ENCODE measurements at regions of chr14 and their contacts with region 1.

Region 1: GRCh38 chr14:62162998-62163589 is 400.9 kb downstream of the SNAPC1 start:
- DNase-seq: peak in 1 of 2 experiments; percentile 48
- H3K4me3 ChIP-seq: no peak overlapping the region
- H3K4me3 Mint-ChIP-seq: no peak overlapping the region
- H3K27ac Mint-ChIP-seq: no peak overlapping the region
- H3K4me1 ChIP-seq: no peaks in the 10 kb centered on the region
- H3K4me1 Mint-ChIP-seq: no peaks in the 10 kb centered on the region
- H3K27me3 ChIP-seq: no peaks in the 10 kb centered on the region
- H3K27me3 Mint-ChIP-seq: peaks cover 14% of the 10 kb centered on the region
- CTCF ChIP-seq: peak; percentile 68 to 80

Region 2: GRCh38 chr14:62289471-62289870 is 126.4 kb after region 1 on chr14:
- CTCF ChIA-PET with region 1: no interaction called
- POLR2A ChIA-PET with region 1: no interaction called
- intact Hi-C with region 1: no loop called
- DNase-seq: no peak
- H3K4me3 ChIP-seq: no peak overlapping the region
- H3K4me3 Mint-ChIP-seq: no peak overlapping the region
- H3K27ac Mint-ChIP-seq: no peak overlapping the region
- H3K4me1 ChIP-seq: no peaks in the 10 kb centered on the region
- H3K4me1 Mint-ChIP-seq: no peaks in the 10 kb centered on the region
- H3K27me3 ChIP-seq: no peaks in the 10 kb centered on the region; the same call in 1 of the 2 replicates
- H3K27me3 Mint-ChIP-seq: no peaks in the 10 kb centered on the region
- CTCF ChIP-seq: no peak

Region 3: DNA sequence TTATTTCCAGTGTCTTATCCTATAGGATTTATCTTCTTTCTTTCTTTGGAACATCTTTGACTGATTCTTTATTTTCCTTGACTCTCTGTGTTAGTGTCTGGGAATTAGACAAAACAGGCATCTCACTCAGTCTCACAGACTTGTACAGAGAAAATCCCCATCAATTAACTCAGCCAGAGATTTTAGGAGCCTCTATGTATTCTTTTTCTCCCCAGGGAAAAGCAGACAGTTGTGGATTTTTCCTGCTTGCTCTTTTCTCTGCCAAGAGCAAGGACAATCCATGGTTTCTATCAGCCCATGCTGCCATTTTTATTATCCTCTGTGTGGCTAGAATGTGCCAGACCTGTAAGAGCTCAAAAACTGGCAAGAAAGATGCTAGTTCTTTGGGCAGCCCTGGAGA is 194.3 kb after region 1 on chr14:
- CTCF ChIA-PET with region 1: no interaction called
- POLR2A ChIA-PET with region 1: no interaction called
- intact Hi-C with region 1: no loop called
- DNase-seq: no peak
- H3K4me3 ChIP-seq: no peak overlapping the region
- H3K4me3 Mint-ChIP-seq: no peak overlapping the region
- H3K27ac Mint-ChIP-seq: no peak overlapping the region
- H3K4me1 ChIP-seq: no peaks in the 10 kb centered on the region
- H3K4me1 Mint-ChIP-seq: no peaks in the 10 kb centered on the region
- H3K27me3 ChIP-seq: no peaks in the 10 kb centered on the region
- H3K27me3 Mint-ChIP-seq: no peaks in the 10 kb centered on the region
- CTCF ChIP-seq: no peak

Region 4: GRCh38 chr14:62451221-62451620 is 288.1 kb after region 1 on chr14:
- CTCF ChIA-PET with region 1: no interaction called
- POLR2A ChIA-PET with region 1: no interaction called
- intact Hi-C with region 1: no loop called
- DNase-seq: no peak
- H3K4me3 ChIP-seq: no peak overlapping the region
- H3K4me3 Mint-ChIP-seq: no peak overlapping the region
- H3K27ac Mint-ChIP-seq: no peak overlapping the region
- H3K4me1 ChIP-seq: no peaks in the 10 kb centered on the region
- H3K4me1 Mint-ChIP-seq: no peaks in the 10 kb centered on the region
- H3K27me3 ChIP-seq: no peaks in the 10 kb centered on the region
- H3K27me3 Mint-ChIP-seq: no peaks in the 10 kb centered on the region
- CTCF ChIP-seq: no peak

Region 5: GRCh38 chr14:63039800-63040380 is 876.8 kb after region 1 on chr14:
- CTCF ChIA-PET with region 1: no interaction called
- POLR2A ChIA-PET with region 1: no interaction called
- intact Hi-C with region 1: loop called (anchors 1 kb)
- DNase-seq: peak in 1 of 2 experiments; percentile 35
- H3K4me3 ChIP-seq: no peak overlapping the region
- H3K4me3 Mint-ChIP-seq: no peak overlapping the region
- H3K27ac Mint-ChIP-seq: no peak overlapping the region
- H3K4me1 ChIP-seq: no peaks in the 10 kb centered on the region
- H3K4me1 Mint-ChIP-seq: peaks cover 6% of the 10 kb centered on the region
- H3K27me3 ChIP-seq: no peaks in the 10 kb centered on the region
- H3K27me3 Mint-ChIP-seq: no peaks in the 10 kb centered on the region
- CTCF ChIP-seq: peak; percentile 42 to 53

Region 6: GRCh38 chr14:63134801-63135200 is 971.7 kb after region 1 on chr14:
- CTCF ChIA-PET with region 1: no interaction called
- POLR2A ChIA-PET with region 1: no interaction called
- intact Hi-C with region 1: loop called (anchors 2 kb)
- DNase-seq: peak in 1 of 2 experiments; percentile 21
- H3K4me3 ChIP-seq: no peak overlapping the region
- H3K4me3 Mint-ChIP-seq: no peak overlapping the region
- H3K27ac Mint-ChIP-seq: no peak overlapping the region
- H3K4me1 ChIP-seq: no peaks in the 10 kb centered on the region
- H3K4me1 Mint-ChIP-seq: no peaks in the 10 kb centered on the region
- H3K27me3 ChIP-seq: no peaks in the 10 kb centered on the region
- H3K27me3 Mint-ChIP-seq: no peaks in the 10 kb centered on the region
- CTCF ChIP-seq: peak; percentile 39 to 42

Region 7: GRCh38 chr14:63308723-63309317 is 1145.7 kb after region 1 on chr14:
- CTCF ChIA-PET with region 1: no interaction called
- POLR2A ChIA-PET with region 1: no interaction called
- intact Hi-C with region 1: loop called (anchors 1 kb)
- DNase-seq: peak; percentile 53
- H3K4me3 ChIP-seq: no peak overlapping the region
- H3K4me3 Mint-ChIP-seq: no peak overlapping the region
- H3K27ac Mint-ChIP-seq: no peak overlapping the region
- H3K4me1 ChIP-seq: no peaks in the 10 kb centered on the region
- H3K4me1 Mint-ChIP-seq: no peaks in the 10 kb centered on the region
- H3K27me3 ChIP-seq: no peaks in the 10 kb centered on the region; the same call in 1 of the 2 replicates
- H3K27me3 Mint-ChIP-seq: peaks cover 12% of the 10 kb centered on the region
- CTCF ChIP-seq: peak; percentile 59 to 84